ENCODE measurements at regions of chr7 and their contacts with region 1.

Region 1: GRCh38 chr7:32204361-32205018 is 134.3 kb upstream of the PDE1C start:
- H3K4me3 ChIP-seq: no peak overlapping the region
- H3K27ac ChIP-seq: no peak overlapping the region
- H3K4me1 ChIP-seq: no peaks in the 10 kb centered on the region
- CTCF ChIP-seq: peak; percentile 63

Region 2: DNA sequence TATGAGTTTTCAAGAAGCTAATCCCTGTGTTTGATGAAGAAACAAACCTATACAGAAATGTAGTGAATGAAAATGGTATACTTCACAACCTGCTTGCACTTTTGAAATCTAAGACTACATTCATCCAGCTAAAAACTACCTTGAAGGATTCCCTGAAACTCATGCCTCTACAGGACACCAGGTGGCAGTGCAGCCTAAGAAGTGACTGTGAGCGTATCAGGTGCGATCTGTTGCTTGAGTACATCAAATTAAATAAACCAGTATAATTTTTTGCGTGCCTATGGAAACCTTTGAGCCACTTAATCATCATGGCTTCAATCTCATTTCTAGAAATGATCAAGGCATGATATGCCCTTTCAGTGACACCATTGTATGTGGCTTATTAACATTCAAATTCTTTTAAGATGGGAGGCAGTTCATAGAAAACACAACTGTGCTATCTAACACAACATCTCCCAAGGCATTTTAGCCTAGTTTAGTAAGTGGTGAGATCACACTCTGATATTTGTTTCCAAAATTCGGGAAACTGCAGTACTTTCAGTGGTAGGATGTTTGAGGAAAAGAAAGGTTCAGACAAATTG is 460.1 kb before region 1 on chr7:
- CTCF ChIA-PET with region 1: interaction called, 62 read pairs
- POLR2A ChIA-PET with region 1: no interaction called
- H3K4me3 ChIP-seq: no peak overlapping the region
- H3K27ac ChIP-seq: no peak overlapping the region
- H3K4me1 ChIP-seq: no peaks in the 10 kb centered on the region
- CTCF ChIP-seq: 0 out of 2 replicates have a peak, but pooled peaks have one; percentile 17

Region 3: DNA sequence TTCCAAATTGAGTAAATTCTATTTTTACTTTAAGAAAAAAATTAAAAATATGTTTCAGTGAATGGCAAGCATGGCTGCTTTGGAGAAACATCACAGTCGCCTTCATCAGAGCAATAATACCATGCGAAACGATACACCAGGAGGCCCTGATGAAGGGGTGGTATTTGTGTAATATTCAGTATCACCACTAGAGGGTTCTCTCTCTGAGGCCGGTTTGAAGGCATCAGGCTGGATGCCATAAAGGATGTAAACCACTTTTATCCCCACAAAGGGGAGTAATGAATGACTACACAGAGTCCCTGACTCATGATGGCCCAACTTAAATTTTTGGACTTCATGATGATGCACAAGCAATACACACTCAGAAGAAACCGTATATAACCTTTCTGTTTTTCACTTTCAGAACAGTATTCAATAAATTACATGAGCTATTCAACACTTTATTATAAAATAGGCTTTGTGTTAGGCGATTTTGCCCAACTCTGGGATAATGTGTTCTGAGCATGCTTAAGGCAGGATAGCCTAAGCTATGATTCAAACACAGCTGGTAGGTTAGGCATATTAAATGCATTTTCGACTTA is 422.0 kb before region 1 on chr7:
- CTCF ChIA-PET with region 1: interaction called, 12 read pairs
- POLR2A ChIA-PET with region 1: no interaction called
- H3K4me3 ChIP-seq: no peak overlapping the region
- H3K27ac ChIP-seq: no peak overlapping the region
- H3K4me1 ChIP-seq: no peaks in the 10 kb centered on the region
- CTCF ChIP-seq: no peak

Region 4: GRCh38 chr7:32215697-32216096 is 11.2 kb after region 1 on chr7:
- CTCF ChIA-PET with region 1: no interaction called
- POLR2A ChIA-PET with region 1: no interaction called
- H3K4me3 ChIP-seq: no peak overlapping the region
- H3K27ac ChIP-seq: no peak overlapping the region
- H3K4me1 ChIP-seq: no peaks in the 10 kb centered on the region
- CTCF ChIP-seq: no peak

Region 5: GRCh38 chr7:32357535-32358277 is 153.2 kb after region 1 on chr7:
- CTCF ChIA-PET with region 1: interaction called, 20 read pairs
- POLR2A ChIA-PET with region 1: no interaction called
- H3K4me3 ChIP-seq: no peak overlapping the region
- H3K27ac ChIP-seq: no peak overlapping the region
- H3K4me1 ChIP-seq: no peaks in the 10 kb centered on the region
- CTCF ChIP-seq: no peak

Region 6: GRCh38 chr7:32479574-32480200 is 275.2 kb after region 1 on chr7:
- CTCF ChIA-PET with region 1: interaction called, 30 read pairs
- POLR2A ChIA-PET with region 1: no interaction called
- H3K4me3 ChIP-seq: no peak overlapping the region
- H3K27ac ChIP-seq: no peak overlapping the region
- H3K4me1 ChIP-seq: no peaks in the 10 kb centered on the region
- CTCF ChIP-seq: 0 out of 2 replicates have a peak, but pooled peaks have one; percentile 25

Measured in HEK293 (cell line).